Psoas muscle (tissue), 8 donors: ENCODE measurements at regions of chr1 and their contacts with region 1.

Region 1: DNA sequence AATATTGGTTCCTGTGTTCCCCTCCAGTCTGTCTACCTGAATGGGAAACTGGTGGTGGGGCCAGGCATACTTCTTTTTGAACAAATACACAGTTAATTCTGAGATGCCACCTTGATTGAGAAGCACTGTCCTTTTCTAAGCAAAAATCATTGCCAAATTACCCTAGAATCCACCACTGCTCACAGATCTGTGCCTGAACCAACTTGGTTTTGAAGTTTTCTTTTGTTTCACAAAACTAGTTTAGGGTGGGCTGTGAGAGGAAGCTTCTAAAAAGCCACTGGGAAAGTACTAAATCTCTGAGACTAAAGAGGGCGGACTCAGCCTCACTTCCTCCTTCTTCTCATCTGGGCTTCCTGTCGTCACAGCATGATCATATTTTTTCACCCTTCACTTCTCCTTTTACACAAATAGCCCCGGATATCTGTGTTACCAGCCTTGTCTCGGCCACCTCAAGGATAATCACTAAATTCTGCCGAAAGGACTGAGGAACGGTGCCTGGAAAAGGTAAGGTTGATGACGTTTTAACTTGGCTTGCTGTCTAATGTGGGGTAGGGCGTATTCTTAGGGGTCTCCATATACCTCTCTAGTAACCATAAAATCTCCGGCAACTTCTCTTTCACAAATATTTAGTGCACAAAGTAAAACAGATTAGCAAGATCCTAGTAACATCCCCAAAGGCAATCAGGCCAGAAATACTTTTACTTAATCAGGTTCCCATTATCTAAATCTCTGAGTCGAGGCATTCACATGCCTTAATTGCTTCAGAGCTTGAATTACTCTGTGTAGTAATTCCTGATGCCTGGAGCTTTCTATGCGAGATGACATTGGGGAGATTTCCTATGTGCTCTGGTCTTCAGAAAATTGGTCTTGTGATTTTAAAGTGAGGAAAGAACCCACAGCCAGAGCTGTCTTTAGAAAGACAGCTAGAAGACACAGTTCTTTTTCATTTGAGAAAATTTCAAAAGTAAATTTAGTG is at the start of gene CD53:
- DNase-seq: no peak
- ATAC-seq: no peak
- H3K4me3 ChIP-seq: peak within 1 kb of the TSS; percentile 49
- H3K27ac ChIP-seq: no peak within 1 kb of the TSS
- H3K4me1 ChIP-seq: no peaks in the 10 kb centered on the region
- H3K27me3 ChIP-seq: no peaks in the 10 kb centered on the region
- CTCF ChIP-seq: no peak
- total RNA-seq, gene CD53: 4.4 to 10.2 (median 6.4) TPM

Region 2: GRCh38 chr1:109598655-109599054 is 1274.4 kb before region 1 on chr1:
- intact Hi-C with region 1: loop called in 1 of 2 experiments (anchors 10 kb)
- DNase-seq: no peak
- ATAC-seq: no peak
- H3K4me3 ChIP-seq: no peak overlapping the region
- H3K27ac ChIP-seq: no peak overlapping the region
- H3K4me1 ChIP-seq: no peaks in the 10 kb centered on the region
- H3K27me3 ChIP-seq: peaks cover 0 to under 1% (median 0%) of the 10 kb centered on the region in 3 donors
- CTCF ChIP-seq: no peak

Region 3: GRCh38 chr1:110433803-110434202 is 439.2 kb before region 1 on chr1:
- intact Hi-C with region 1: no loop called
- DNase-seq: peak; percentile 58 to 79
- ATAC-seq: peak; percentile 67 to 90 (median 82)
- H3K4me3 ChIP-seq: no peak overlapping the region
- H3K27ac ChIP-seq: no peak overlapping the region
- H3K4me1 ChIP-seq: no peaks in the 10 kb centered on the region
- H3K27me3 ChIP-seq: no peaks in the 10 kb centered on the region
- CTCF ChIP-seq: no peak

Region 4: GRCh38 chr1:110963691-110964399 is 90.8 kb after region 1 on chr1 and contains the start of gene LRIF1:
- intact Hi-C with region 1: no loop called
- DNase-seq: peak; percentile 100
- ATAC-seq: peak; percentile 98 to 100 (median 100)
- H3K4me3 ChIP-seq: peak within 1 kb of the TSS; percentile 83
- H3K27ac ChIP-seq: peak within 1 kb of the TSS; percentile 93
- H3K4me1 ChIP-seq: peaks cover 23% of the 10 kb centered on the region
- H3K27me3 ChIP-seq: peaks cover under 1 to 25% (median 3%) of the 10 kb centered on the region in 3 donors
- CTCF ChIP-seq: peak; percentile 51
- total RNA-seq, gene LRIF1: 6.8 to 18.1 (median 12.0) TPM